AG04450 (cell line): ENCODE measurements at regions of chr12 and their contacts with region 1.

Region 1: GRCh38 chr12:104381731-104382480 is 74.8 kb upstream of the CHST11 start:
- DNase-seq: peak; percentile 51
- H3K4me3 ChIP-seq: no peak overlapping the region
- H3K27ac ChIP-seq: no peak overlapping the region
- H3K27me3 ChIP-seq: no peaks in the 10 kb centered on the region
- CTCF ChIP-seq: peak; percentile 99

Region 2: DNA sequence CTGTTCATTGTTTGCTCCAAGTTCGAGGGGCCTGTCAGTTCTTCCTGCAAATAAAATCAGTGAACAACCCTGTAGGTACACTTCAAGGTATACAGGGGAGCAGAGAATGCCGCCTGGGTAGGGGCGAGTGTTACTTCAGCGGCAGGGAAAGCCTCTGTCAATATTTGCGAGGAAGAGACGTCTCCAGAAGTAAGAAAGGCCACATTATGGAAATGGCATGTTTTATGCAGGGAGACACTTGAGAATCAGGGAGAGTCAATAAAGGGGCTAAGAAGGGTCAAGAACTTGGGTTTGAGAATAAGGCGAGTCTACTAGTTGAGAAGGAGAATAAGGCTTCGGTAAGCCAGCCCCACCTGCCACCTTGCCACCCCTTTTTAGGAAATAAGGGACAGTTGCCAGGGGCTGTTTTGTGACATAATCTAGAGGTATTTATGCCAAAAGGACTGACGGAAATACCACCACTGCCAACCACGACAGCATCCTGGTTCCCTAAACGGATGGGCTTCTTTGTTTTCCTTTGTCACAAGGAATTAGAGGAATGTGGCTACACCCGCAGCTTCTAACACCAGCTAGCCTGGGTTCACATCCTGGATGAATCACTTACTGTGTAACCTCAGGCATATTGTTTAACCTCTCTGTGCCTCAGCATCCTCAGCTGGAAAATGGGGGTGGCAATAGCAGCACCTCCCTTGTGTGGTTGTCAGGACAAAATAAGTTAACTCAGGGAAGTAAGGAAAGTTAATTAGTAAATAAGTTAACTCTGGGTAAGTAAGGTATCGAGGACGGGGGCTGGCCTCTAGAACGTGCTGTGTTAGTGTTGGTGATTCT is 10.6 kb before region 1 on chr12:
- CTCF ChIA-PET with region 1: interaction called, 20 read pairs
- POLR2A ChIA-PET with region 1: no interaction called
- DNase-seq: no peak
- H3K4me3 ChIP-seq: no peak overlapping the region
- H3K27ac ChIP-seq: no peak overlapping the region
- H3K27me3 ChIP-seq: no peaks in the 10 kb centered on the region
- CTCF ChIP-seq: no peak

Region 3: GRCh38 chr12:104662203-104662602 is 280.3 kb after region 1 on chr12:
- CTCF ChIA-PET with region 1: interaction called, 11 read pairs
- POLR2A ChIA-PET with region 1: no interaction called
- DNase-seq: no peak
- H3K4me3 ChIP-seq: no peak overlapping the region
- H3K27ac ChIP-seq: no peak overlapping the region
- H3K27me3 ChIP-seq: peaks cover 6% of the 10 kb centered on the region
- CTCF ChIP-seq: no peak

Region 4: DNA sequence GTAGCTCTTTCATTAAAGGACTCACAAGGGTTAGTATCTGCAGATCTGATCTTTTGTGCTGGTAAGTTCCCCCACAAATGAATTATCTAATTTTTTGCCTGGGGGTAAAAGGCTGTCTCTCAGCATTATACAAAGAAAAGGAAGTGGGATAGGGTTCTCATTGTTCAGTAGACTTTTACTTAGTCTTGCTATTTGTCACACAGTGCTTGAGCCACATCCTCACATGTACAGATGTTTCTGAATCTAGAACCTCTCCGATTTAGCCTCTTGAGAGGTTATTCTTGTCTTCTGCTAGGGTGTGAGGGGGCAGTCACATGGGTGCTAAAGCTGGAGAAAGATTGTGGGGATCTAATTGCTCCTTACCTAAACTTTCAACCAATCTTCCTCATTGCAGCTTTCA is 483.2 kb after region 1 on chr12:
- CTCF ChIA-PET with region 1: interaction called, 24 read pairs
- POLR2A ChIA-PET with region 1: no interaction called
- DNase-seq: no peak
- H3K4me3 ChIP-seq: no peak overlapping the region
- H3K27ac ChIP-seq: no peak overlapping the region
- H3K27me3 ChIP-seq: no peaks in the 10 kb centered on the region
- CTCF ChIP-seq: no peak

Region 5: DNA sequence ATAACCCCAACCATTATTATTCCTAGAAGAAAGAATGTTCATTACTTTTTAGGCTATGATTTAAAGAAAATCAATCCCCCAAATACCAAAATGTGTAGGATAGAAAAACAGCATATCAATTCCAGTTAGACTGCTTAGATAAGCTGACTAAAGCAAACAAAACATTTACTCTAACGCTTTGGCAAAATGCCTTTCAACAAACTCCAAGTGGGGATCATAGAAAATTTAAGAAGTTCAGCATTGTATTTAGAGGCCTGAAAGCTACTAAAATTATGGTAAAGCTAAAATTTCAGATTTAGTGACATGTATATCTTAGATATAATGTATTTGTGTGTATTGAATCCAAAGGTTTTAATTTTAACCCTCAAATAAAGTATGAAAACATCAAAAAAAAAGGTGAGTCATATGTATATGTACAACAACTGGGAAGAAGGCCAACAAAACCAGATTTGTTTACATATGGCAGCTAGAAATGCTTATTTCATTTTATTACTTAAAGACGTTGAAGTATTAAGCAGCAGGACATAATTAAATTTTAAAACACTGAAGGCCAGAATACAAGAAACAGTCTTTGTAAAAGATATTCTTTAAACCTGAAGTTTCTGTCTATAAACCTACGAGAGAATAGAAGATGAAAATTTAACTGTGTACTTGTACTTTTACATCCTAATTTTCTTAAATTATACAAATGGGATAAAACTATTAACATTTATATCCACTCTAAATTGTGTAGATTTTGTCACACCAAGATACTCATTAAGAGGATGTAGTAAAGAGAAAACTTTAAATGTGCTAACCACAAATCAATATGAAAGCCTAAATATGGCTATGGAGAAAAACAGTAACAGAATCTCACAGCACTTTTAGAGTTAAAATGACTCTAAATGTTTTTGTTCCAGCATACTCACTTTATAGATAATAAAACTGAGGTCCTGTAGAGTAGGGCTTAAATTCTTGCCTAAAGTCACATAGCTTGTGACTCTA is 504.8 kb after region 1 on chr12:
- CTCF ChIA-PET with region 1: interaction called, 37 read pairs
- POLR2A ChIA-PET with region 1: no interaction called
- DNase-seq: peak; percentile 63
- H3K4me3 ChIP-seq: no peak overlapping the region
- H3K27ac ChIP-seq: no peak overlapping the region
- H3K27me3 ChIP-seq: no peaks in the 10 kb centered on the region
- CTCF ChIP-seq: no peak